Calu3 (cell line): ENCODE measurements at regions of chr3 and their contacts with region 1.

Region 1: DNA sequence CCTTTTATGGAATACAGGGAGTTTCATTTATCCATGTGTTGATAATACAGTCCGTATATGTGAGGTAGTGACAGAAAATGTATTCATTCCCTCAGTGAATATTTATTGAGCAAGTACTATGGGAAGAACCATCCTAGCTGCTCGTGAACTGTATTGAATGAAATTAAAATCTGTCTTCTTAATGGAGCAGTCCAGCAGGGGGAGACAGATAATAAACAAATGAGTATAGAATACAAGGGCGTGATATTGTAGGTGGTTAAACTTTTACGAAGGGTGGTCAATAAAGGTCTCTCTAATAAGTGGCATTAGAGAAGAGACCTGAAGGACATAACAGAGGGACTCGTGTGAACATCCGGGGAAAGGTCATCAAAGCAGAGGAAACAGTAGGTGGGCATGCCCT is 62.7 kb upstream of the OSTN start:
- DNase-seq: peak; percentile 36
- H3K4me3 Mint-ChIP-seq: no peak overlapping the region
- H3K27ac Mint-ChIP-seq: no peak overlapping the region
- H3K4me1 Mint-ChIP-seq: peaks cover 18% of the 10 kb centered on the region
- H3K27me3 Mint-ChIP-seq: no peaks in the 10 kb centered on the region
- CTCF ChIP-seq: peak; percentile 56

Region 2: GRCh38 chr3:191210032-191210431 is 73.7 kb after region 1 on chr3:
- CTCF ChIA-PET with region 1: no interaction called
- intact Hi-C with region 1: no loop called
- DNase-seq: no peak
- H3K4me3 Mint-ChIP-seq: no peak overlapping the region
- H3K27ac Mint-ChIP-seq: no peak overlapping the region
- H3K4me1 Mint-ChIP-seq: no peaks in the 10 kb centered on the region
- H3K27me3 Mint-ChIP-seq: no peaks in the 10 kb centered on the region
- CTCF ChIP-seq: no peak

Region 3: DNA sequence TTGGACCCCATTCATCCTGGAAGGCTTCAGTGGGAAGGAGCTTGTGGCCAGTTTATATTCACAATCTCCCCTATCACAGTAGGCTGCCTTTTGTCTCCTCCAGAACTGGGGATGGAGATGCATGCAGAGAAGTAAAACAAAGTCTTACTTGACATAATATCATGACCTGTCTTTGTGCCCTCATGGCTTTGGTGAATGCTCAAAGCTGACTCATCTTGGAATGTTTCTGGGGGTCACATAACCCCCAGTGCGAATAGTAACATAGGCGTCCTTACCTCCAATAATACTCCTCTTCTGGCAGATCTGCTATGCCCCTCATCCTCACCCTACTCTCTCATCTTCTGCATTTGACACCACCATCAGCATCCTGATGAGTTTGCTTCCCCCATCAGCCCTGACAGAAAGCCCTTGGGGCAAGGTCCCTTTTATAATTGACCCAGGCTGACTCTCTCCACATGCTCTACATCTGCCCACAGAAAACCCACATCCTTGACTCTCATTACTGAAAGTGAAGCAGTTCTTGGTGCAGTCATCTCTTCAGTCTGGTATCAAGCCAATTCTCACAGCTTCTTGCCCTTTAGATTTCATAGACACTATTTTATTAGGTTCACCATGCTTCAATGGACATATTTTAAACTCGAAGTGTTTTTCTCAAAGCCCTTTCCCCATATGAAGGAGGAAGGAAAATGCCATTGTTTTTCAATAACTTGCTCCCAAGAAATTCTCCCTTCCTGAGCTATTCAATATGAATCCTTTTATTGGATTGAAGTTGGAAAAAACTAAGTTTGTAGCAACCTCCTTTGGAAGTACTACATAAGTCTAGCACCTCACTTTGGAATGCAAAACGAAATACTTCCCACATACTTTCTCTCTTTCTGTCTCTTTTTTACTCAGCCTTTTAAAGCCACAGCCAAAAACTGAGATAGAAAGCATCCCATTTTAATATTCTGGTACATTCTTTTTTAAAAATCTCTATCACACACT is 99.3 kb after region 1 on chr3:
- CTCF ChIA-PET with region 1: no interaction called
- intact Hi-C with region 1: loop called (anchors 5 kb)
- DNase-seq: no peak
- H3K4me3 Mint-ChIP-seq: no peak overlapping the region
- H3K27ac Mint-ChIP-seq: no peak overlapping the region
- H3K4me1 Mint-ChIP-seq: peaks cover 53% of the 10 kb centered on the region
- H3K27me3 Mint-ChIP-seq: no peaks in the 10 kb centered on the region
- CTCF ChIP-seq: no peak